ENCODE measurements at regions of chr1 and their contacts with region 1.

Region 1: DNA sequence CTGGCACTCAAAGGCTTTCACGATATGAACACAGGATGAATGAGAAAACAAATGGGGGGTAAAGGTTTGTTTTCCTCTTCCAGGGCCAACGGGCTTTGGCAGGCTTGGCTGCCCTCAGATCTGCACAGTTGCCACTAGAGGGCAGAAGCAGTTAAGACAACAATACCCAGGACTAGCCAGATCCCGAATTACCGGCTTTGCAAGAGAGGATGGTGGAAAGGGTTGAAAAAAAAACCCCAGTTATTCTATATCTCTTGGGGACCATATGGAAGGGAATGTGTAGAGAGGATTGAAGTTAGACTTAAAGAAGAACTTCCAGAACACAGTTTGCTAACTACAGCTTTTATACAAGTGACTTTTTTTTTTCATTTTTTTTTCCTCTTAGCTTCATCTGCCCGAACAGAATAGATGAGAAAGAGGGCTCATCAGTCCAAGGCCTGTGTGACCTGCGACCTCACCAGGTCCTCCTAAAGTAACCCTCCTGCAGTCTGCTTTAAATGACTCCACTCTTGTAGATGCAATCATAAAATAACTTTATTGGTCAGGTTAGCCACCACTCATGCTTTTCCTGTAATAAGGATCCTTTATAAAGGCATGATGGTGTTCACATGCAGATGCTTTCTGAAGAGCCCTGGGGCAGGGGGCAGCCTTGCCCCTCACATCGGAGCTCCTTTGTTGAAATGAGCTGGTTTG is 10.7 kb downstream of the FMOD start:
- DNase-seq: peak; percentile 81 to 95
- H3K4me3 ChIP-seq: no peak overlapping the region
- H3K27ac ChIP-seq: peak overlapping the region in 2 of 5 donors; percentile 7 to 48
- H3K4me1 ChIP-seq: peaks cover 0 to 62% (median 37%) of the 10 kb centered on the region in 4 donors
- H3K27me3 ChIP-seq: no peaks in the 10 kb centered on the region
- CTCF ChIP-seq: peak in 6 of 7 experiments; percentile 3 to 96 (median 89)
- EP300 ChIP-seq: no peak
- POLR2A ChIP-seq: no peak

Region 2: GRCh38 chr1:203273206-203273868 is 66.9 kb before region 1 on chr1:
- intact Hi-C with region 1: loop called (anchors 2 kb)
- DNase-seq: peak; percentile 95 to 96
- H3K4me3 ChIP-seq: peak overlapping the region; percentile 24 to 37 (median 26)
- H3K27ac ChIP-seq: peak overlapping the region; percentile 77 to 93 (median 87)
- H3K4me1 ChIP-seq: peaks cover 32 to 69% (median 53%) of the 10 kb centered on the region in 4 donors
- H3K27me3 ChIP-seq: no peaks in the 10 kb centered on the region
- CTCF ChIP-seq: peak in 6 of 7 experiments; percentile 58 to 100 (median 96)
- EP300 ChIP-seq: no peak
- POLR2A ChIP-seq: no peak

Region 3: DNA sequence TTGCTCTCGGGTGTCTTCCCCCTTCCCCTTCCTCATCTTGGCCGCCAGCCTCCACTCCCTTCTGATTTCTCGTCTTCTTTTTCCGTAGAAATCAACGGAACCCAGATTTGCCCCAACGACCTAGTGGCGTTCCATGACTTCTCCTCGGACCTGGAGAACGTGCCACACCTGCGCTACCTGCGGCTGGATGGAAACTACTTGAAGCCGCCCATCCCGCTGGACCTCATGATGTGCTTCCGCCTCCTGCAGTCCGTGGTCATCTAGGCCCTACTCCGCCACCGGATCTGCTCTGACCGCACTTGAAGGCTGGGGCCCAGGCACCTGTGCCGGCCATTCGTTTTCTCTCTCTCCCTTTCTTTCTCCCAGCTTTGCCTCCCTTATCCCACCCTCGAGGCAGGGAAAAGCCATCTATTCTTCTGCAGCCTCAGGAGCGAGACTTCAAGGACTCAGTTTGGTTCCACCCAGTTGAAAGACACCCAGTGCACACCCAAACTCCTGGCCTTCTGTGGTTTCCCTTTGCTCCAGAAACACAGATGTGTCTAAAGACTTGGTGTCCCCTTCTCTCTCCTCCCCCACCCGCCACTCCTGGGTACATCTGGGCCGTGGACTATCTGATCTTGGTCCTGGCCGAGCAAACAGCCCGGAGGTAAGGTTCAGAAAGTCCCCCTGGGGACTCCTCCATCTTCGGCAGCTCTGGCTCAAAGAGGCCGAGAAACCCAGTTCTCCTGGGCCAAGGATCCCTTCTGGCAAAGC is 146.5 kb after region 1 on chr1:
- intact Hi-C with region 1: loop called (anchors 5 kb)
- DNase-seq: no peak
- H3K4me3 ChIP-seq: peak overlapping the region; percentile 38 to 46 (median 40)
- H3K27ac ChIP-seq: peak overlapping the region; percentile 11 to 87 (median 79)
- H3K4me1 ChIP-seq: peaks cover 5 to 34% (median 20%) of the 10 kb centered on the region in 4 donors
- H3K27me3 ChIP-seq: no peaks in the 10 kb centered on the region
- CTCF ChIP-seq: no peak
- EP300 ChIP-seq: no peak
- POLR2A ChIP-seq: no peak

Region 4: GRCh38 chr1:203534527-203535230 is 194.4 kb after region 1 on chr1:
- intact Hi-C with region 1: no loop called
- DNase-seq: peak in 1 of 2 donors; percentile 86
- H3K4me3 ChIP-seq: no peak overlapping the region
- H3K27ac ChIP-seq: peak overlapping the region in 3 of 5 donors; percentile 64 to 86 (median 73)
- H3K4me1 ChIP-seq: peaks cover 22 to 71% (median 37%) of the 10 kb centered on the region in 4 donors
- H3K27me3 ChIP-seq: no peaks in the 10 kb centered on the region
- CTCF ChIP-seq: no peak
- EP300 ChIP-seq: peak; percentile 65
- POLR2A ChIP-seq: no peak